ENCODE measurements at regions of chrX and their contacts with region 1.

Region 1: GRCh38 chrX:85897362-85898126 is 149.8 kb downstream of the CHM start:
- DNase-seq: no peak

Region 2: DNA sequence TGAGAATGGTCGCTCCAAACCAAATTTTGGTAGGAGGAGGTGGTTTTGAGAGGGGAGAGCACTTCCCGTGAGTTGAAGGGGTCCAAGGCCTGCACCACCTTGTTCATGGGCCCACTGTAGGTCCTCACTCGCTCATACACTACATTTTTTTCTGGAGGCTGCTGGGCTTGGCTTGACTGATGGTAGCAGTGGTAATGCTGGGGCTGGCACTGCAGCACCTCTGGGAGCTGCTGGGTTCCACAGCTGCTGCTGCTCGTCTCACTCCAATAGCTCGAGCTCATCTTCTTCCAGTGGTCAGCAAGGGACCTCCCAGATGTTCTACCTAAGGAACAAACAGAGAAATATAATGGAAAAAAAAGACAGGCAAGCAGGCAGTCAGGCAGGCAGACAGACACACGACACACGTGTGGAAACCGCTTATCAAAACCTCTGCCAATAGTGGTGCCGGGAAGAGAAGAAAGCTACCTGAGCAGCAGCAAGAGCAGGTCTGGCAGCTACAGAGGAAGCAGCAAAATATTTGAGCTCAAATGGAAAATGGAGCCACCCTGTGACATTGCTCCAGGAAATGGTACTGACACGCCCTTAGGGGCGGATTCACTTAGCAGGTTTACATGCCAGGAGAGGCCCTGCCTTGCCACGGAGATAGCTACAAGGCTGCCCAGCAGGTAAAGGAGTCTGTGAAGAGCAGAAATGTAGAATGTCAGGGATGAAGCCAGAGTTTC is 518.2 kb before region 1 on chrX and contains the start of gene POF1B:
- intact Hi-C with region 1: loop called in 1 of 2 experiments (anchors 5 kb)
- DNase-seq: no peak
- total RNA-seq, gene POF1B: 1.0 to 1.5 TPM

Region 3: DNA sequence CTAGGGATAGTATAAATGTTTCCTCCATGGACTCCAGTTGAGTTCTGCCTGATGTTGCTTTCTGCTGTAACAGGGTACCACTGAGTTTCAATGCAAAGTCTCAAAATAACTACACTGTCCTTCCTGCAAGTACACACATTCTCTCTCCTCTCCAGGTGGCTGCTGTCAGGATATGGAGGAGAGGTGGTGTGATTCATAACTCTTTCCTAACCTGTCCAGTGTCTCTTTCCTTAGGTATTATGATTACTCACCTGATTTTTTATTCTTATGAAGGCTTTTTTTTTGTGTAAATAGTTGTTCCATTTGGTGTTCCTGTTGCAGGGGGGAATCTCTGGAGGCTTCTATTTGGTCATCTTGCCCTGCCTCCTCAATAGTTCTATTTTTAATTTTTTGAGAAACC is 478.3 kb before region 1 on chrX:
- intact Hi-C with region 1: no loop called
- DNase-seq: no peak

Region 4: GRCh38 chrX:85828771-85829170 is 68.8 kb before region 1 on chrX:
- intact Hi-C with region 1: loop called in 1 of 2 experiments (anchors 2 kb)
- DNase-seq: no peak

Region 5: DNA sequence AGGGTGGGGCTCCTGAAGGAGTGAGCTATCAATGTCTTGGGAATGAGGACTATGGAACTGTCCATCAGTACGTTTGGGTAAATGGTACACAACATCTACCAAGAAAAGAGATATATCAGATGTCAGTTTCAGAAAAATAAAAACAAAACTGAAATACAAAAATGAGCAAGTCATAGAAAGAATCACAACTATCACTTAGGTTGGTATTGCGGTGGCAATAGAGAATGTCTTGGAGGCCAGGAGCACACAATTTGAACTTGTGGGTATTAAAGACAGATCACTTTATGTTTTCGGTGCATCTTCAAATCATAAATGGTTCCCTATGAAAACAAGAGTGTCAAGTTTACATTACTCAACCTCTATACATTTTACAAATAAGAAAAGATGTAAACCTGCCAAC is 27.0 kb before region 1 on chrX:
- intact Hi-C with region 1: loop called in 1 of 2 experiments (anchors 2 kb)
- DNase-seq: no peak